ENCODE measurements at regions of chrX and their contacts with region 1.

Region 1: GRCh38 chrX:150084496-150085229 is 146.4 kb upstream of the EOLA2 start:
- DNase-seq: peak; percentile 87
- ATAC-seq: peak; percentile 83
- H3K4me3 ChIP-seq: peak overlapping the region; percentile 11; the same call in 1 of the 2 replicates
- H3K27ac ChIP-seq: peak overlapping the region; percentile 94
- H3K4me1 ChIP-seq: peaks cover 33% of the 10 kb centered on the region
- H3K27me3 ChIP-seq: no peaks in the 10 kb centered on the region
- CTCF ChIP-seq: no peak

Region 2: DNA sequence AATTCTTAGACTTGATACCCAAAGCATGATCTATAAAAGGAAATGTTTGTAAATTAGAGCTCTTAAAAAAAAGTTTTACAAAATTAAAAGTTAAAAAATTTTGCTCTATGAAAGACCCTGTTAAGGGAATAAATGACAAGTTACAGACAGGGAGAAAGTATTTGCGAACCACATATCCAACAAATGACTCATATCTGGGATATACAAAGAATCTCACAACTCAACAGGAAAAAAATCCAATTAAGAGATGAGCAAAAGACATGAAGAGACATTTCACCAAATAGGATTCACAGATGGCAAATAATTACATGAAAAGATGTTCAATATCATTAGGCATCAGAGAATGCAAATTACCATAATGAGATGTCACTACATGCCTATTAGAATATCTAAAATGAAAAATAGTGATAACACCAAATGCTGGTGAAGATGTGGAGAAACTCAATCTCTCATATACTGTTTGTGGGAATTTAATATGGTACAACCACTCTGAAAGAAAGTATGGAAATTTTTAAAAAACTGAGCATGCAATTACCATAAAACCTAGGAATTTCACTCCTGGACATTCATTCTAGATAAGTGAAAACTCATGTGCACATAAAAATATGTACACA is 45.6 kb before region 1 on chrX:
- CTCF ChIA-PET with region 1: no interaction called
- POLR2A ChIA-PET with region 1: no interaction called
- intact Hi-C with region 1: loop called (anchors 2 kb)
- DNase-seq: peak; percentile 49
- ATAC-seq: peak; percentile 50
- H3K4me3 ChIP-seq: no peak overlapping the region
- H3K27ac ChIP-seq: 0 out of 2 replicates have a peak overlapping the region, but pooled peaks have one; percentile 11
- H3K4me1 ChIP-seq: peaks cover 40% of the 10 kb centered on the region
- H3K27me3 ChIP-seq: no peaks in the 10 kb centered on the region
- CTCF ChIP-seq: no peak

Region 3: DNA sequence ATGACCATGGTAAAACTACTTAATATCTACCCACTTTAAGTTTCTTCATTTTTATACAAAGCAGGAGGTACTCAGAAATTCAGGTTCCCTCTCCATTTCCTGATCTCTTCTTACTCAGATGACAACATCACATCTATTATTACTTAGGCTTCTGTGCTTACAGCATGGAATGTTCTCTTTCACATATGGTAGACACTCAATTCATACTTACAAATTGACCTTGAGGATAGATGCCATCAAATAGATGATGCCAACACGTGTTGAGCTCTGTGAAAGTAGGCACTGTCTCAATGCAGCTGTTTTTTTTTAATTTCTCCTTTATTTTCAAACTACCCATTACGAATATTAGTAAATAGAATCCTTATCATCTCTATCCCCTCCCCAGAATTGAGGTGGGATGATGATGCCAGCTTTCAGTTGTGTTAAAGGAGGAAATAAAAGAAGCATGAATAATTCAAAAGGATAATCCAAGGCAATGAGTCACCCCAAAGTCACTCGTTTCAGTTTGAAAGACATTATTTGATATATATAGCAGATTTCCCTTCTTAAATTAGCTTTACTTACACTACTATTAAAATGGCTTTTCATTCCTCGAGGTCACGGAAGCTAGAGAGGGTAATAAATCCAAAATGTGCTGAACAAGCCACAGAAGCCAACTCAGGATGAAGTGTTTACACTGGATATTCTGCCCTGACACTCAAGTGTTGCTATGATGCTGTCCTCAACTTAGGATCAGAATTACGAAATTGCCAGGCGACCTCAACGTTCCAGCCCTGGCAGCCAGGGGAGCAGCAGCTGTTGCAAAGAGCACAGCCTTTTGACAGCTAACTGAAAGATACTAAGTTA is 22.1 kb before region 1 on chrX:
- CTCF ChIA-PET with region 1: no interaction called
- POLR2A ChIA-PET with region 1: no interaction called
- intact Hi-C with region 1: loop called (anchors 1 kb)
- DNase-seq: peak; percentile 78
- ATAC-seq: peak; percentile 89
- H3K4me3 ChIP-seq: no peak overlapping the region; the same call in 1 of the 2 replicates
- H3K27ac ChIP-seq: peak overlapping the region; percentile 67
- H3K4me1 ChIP-seq: peaks cover 35% of the 10 kb centered on the region
- H3K27me3 ChIP-seq: no peaks in the 10 kb centered on the region
- CTCF ChIP-seq: no peak

Region 4: GRCh38 chrX:150119323-150119722 is 34.7 kb after region 1 on chrX:
- CTCF ChIA-PET with region 1: no interaction called
- POLR2A ChIA-PET with region 1: interaction called, 8 read pairs
- intact Hi-C with region 1: loop called (anchors 5 kb)
- DNase-seq: no peak
- ATAC-seq: no peak
- H3K4me3 ChIP-seq: no peak overlapping the region
- H3K27ac ChIP-seq: no peak overlapping the region
- H3K4me1 ChIP-seq: no peaks in the 10 kb centered on the region
- H3K27me3 ChIP-seq: no peaks in the 10 kb centered on the region
- CTCF ChIP-seq: no peak

Region 5: GRCh38 chrX:150192816-150193215 is 108.2 kb after region 1 on chrX:
- CTCF ChIA-PET with region 1: no interaction called
- POLR2A ChIA-PET with region 1: no interaction called
- intact Hi-C with region 1: no loop called
- DNase-seq: peak; percentile 61
- ATAC-seq: peak; percentile 57
- H3K4me3 ChIP-seq: no peak overlapping the region
- H3K27ac ChIP-seq: 0 out of 2 replicates have a peak overlapping the region, but pooled peaks have one; percentile 16
- H3K4me1 ChIP-seq: peaks cover 5% of the 10 kb centered on the region; the same call in 1 of the 2 replicates
- H3K27me3 ChIP-seq: no peaks in the 10 kb centered on the region
- CTCF ChIP-seq: no peak

Measured in PC-3 (cell line).